ENCODE measurements at regions of chr11 and their contacts with region 1.

Region 1: GRCh38 chr11:47426061-47426956 is at the start of gene PSMC3:
- DNase-seq: peak; percentile 92 to 99 (median 95)
- ATAC-seq: peak; percentile 98
- H3K4me3 ChIP-seq: peak within 1 kb of the TSS; percentile 95
- H3K4me3 Mint-ChIP-seq: peak within 1 kb of the TSS; percentile 91 to 99 (median 98)
- H3K27ac ChIP-seq: peak within 1 kb of the TSS; percentile 96
- H3K27ac Mint-ChIP-seq: peak within 1 kb of the TSS; percentile 93 to 99 (median 97)
- H3K4me1 ChIP-seq: peaks cover 9 to 10% of the 10 kb centered on the region in 2 donors
- H3K4me1 Mint-ChIP-seq: peaks cover 16 to 32% (median 27%) of the 10 kb centered on the region in 7 donors
- H3K27me3 ChIP-seq: no peaks in the 10 kb centered on the region
- H3K27me3 Mint-ChIP-seq: no peaks in the 10 kb centered on the region
- total RNA-seq, gene PSMC3: 42.2 to 149 (median 51.3) TPM

Region 2: DNA sequence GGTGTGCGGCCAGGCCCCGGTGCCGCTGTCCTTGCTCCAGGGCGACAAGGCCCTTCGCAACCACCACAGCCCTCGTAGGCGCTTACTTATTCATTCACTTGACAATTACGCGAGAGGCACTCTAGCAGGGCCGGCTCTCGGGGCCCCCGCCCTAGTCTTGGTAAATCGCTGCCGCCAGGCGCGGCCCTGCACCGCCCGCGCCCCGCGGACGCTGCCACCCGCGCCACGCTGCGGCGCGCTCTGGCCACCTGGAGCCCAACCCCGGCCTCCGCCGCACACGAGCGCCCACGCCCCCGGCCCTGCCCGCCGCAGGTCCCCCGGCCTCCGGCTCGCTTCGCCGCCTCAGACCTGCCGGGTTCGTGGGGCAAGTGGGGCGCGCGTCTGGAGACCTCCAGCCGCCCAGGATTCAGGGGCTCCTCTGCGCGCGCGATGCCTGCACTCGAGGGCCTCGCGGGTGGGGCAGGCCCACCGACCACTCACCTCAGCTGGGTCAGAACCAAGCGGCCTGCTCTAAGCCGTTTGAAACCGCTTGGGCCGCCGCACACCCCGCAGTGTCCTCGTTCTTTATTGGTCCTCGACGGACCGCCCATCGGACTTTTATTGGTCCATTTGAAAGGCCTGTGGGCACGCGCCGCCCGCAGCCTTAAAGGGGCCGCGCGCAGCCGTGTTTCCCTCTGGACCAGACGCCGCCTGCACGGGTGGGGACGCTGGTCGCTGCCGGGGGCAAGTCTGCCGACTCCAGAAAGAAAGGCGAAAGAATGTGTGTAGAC is 580.4 kb before region 1 on chr11 and contains the start of gene CKAP5:
- CTCF ChIA-PET with region 1: no interaction called
- POLR2A ChIA-PET with region 1: no interaction called
- intact Hi-C with region 1: loop called in 1 of 2 experiments (anchors 1 kb)
- DNase-seq: peak; percentile 63 to 89 (median 80)
- ATAC-seq: peak; percentile 96
- H3K4me3 ChIP-seq: peak within 1 kb of the TSS; percentile 71
- H3K4me3 Mint-ChIP-seq: peak within 1 kb of the TSS; percentile 85 to 99 (median 97)
- H3K27ac ChIP-seq: peak within 1 kb of the TSS; percentile 71
- H3K27ac Mint-ChIP-seq: peak within 1 kb of the TSS; percentile 88 to 97 (median 93)
- H3K4me1 ChIP-seq: peaks cover 0 to 14% of the 10 kb centered on the region in 2 donors
- H3K4me1 Mint-ChIP-seq: peaks cover 33 to 50% (median 43%) of the 10 kb centered on the region in 7 donors
- H3K27me3 ChIP-seq: no peaks in the 10 kb centered on the region
- H3K27me3 Mint-ChIP-seq: no peaks in the 10 kb centered on the region
- total RNA-seq, gene CKAP5: 28.3 to 126 (median 46.0) TPM

Region 3: GRCh38 chr11:47241841-47242301 is 184.4 kb before region 1 on chr11:
- CTCF ChIA-PET with region 1: no interaction called
- POLR2A ChIA-PET with region 1: no interaction called
- intact Hi-C with region 1: no loop called
- DNase-seq: no peak
- ATAC-seq: no peak
- H3K4me3 ChIP-seq: no peak overlapping the region
- H3K4me3 Mint-ChIP-seq: no peak overlapping the region
- H3K27ac ChIP-seq: no peak overlapping the region
- H3K27ac Mint-ChIP-seq: peak overlapping the region in 8 of 9 donors; percentile 2 to 84 (median 58)
- H3K4me1 ChIP-seq: no peaks in the 10 kb centered on the region
- H3K4me1 Mint-ChIP-seq: peaks cover 0 to 12% (median 9%) of the 10 kb centered on the region in 7 donors
- H3K27me3 ChIP-seq: no peaks in the 10 kb centered on the region
- H3K27me3 Mint-ChIP-seq: no peaks in the 10 kb centered on the region

Region 4: GRCh38 chr11:47373876-47374720 is 52.2 kb before region 1 on chr11:
- CTCF ChIA-PET with region 1: interaction called, 5 read pairs
- POLR2A ChIA-PET with region 1: interaction called, 6 read pairs
- intact Hi-C with region 1: loop called in 1 of 2 experiments (anchors 1 kb)
- DNase-seq: peak; percentile 69 to 91 (median 82)
- ATAC-seq: peak; percentile 84
- H3K4me3 ChIP-seq: no peak overlapping the region
- H3K4me3 Mint-ChIP-seq: peak overlapping the region in 1 of 10 donors; percentile 51
- H3K27ac ChIP-seq: no peak overlapping the region
- H3K27ac Mint-ChIP-seq: peak overlapping the region in 3 of 9 donors; percentile 48 to 72 (median 65)
- H3K4me1 ChIP-seq: peaks cover 0 to 3% of the 10 kb centered on the region in 2 donors
- H3K4me1 Mint-ChIP-seq: peaks cover 5 to 18% (median 9%) of the 10 kb centered on the region in 7 donors
- H3K27me3 ChIP-seq: no peaks in the 10 kb centered on the region
- H3K27me3 Mint-ChIP-seq: no peaks in the 10 kb centered on the region

Region 5: GRCh38 chr11:47407746-47408590 is 18.3 kb before region 1 on chr11 and contains the start of gene SLC39A13:
- CTCF ChIA-PET with region 1: interaction called, 7 read pairs
- POLR2A ChIA-PET with region 1: interaction called, 6 read pairs
- intact Hi-C with region 1: loop called (anchors 1 kb)
- DNase-seq: peak; percentile 80 to 99 (median 88)
- ATAC-seq: peak; percentile 91
- H3K4me3 ChIP-seq: peak within 1 kb of the TSS; percentile 71
- H3K4me3 Mint-ChIP-seq: peak within 1 kb of the TSS; percentile 87 to 99 (median 91)
- H3K27ac ChIP-seq: peak within 1 kb of the TSS; percentile 83
- H3K27ac Mint-ChIP-seq: peak within 1 kb of the TSS; percentile 90 to 98 (median 94)
- H3K4me1 ChIP-seq: peaks cover 8 to 13% of the 10 kb centered on the region in 2 donors
- H3K4me1 Mint-ChIP-seq: peaks cover 4 to 23% (median 21%) of the 10 kb centered on the region in 7 donors
- H3K27me3 ChIP-seq: no peaks in the 10 kb centered on the region
- H3K27me3 Mint-ChIP-seq: no peaks in the 10 kb centered on the region
- total RNA-seq, gene SLC39A13: 29.9 to 60.4 (median 45.1) TPM

Region 6: GRCh38 chr11:47578524-47579460 is 152.5 kb after region 1 on chr11 and contains the starts of genes KBTBD4 and NDUFS3:
- CTCF ChIA-PET with region 1: no interaction called
- POLR2A ChIA-PET with region 1: no interaction called
- intact Hi-C with region 1: loop called (anchors 1 kb)
- DNase-seq: peak; percentile 85 to 95 (median 88)
- ATAC-seq: peak; percentile 97
- H3K4me3 ChIP-seq: peak within 1 kb of the TSS; percentile 95
- H3K4me3 Mint-ChIP-seq: peak within 1 kb of the TSS; percentile 95 to 100 (median 99)
- H3K27ac ChIP-seq: peak within 1 kb of the TSS; percentile 80
- H3K27ac Mint-ChIP-seq: peak within 1 kb of the TSS; percentile 97 to 100 (median 99)
- H3K4me1 ChIP-seq: peaks cover 26 to 28% of the 10 kb centered on the region in 2 donors
- H3K4me1 Mint-ChIP-seq: peaks cover 17 to 51% (median 41%) of the 10 kb centered on the region in 7 donors
- H3K27me3 ChIP-seq: no peaks in the 10 kb centered on the region
- H3K27me3 Mint-ChIP-seq: no peaks in the 10 kb centered on the region
- total RNA-seq, gene KBTBD4: 15.0 to 26.5 (median 20.9) TPM
- total RNA-seq, gene NDUFS3: 68.6 to 116 (median 85.2) TPM

Region 7: DNA sequence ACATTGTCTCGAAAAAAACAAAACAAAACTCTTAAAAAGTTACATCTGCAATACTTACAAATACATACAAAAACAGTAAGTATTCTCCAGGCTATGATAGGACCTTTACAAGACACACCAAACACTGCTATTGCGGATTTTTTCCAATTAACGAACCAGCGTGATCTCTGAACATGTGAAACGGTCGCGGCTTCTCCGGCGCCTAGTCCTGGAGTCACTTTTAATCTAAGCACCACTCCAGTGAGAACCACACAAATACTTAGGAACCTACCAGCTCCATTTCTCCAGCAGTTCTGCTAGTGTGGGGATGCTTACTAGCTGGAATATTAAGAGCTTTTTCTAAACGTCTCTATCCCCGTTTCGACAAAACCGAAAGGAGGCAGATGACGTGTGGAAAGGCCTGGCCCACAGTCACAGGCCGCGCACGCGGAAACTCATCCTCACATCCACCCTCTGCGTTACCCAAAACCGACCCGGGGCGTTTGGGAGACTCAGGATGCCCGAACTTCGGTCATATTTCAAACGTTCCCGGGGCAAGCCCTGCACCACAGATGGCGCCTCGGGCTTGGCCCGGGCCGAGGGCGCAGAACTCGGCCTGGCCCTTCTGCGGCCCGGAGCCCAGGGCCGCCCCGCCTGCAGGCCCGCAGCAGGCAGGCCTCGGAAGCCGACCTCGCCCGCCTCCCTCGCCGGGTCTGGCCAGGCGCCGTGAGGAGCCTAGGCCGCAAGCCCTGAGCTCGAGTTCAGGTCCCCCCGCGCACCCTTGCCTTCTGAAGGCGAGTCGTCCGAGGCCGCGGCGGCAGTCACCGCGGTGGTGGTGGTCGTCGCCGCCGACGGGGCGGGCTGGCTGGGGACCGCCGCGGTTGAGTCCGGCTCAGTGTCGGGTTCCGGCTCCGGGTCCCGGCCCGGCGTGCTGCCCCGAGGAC is 340.3 kb after region 1 on chr11:
- CTCF ChIA-PET with region 1: no interaction called
- POLR2A ChIA-PET with region 1: no interaction called
- intact Hi-C with region 1: loop called (anchors 1 kb)
- DNase-seq: peak; percentile 60 to 84 (median 79)
- ATAC-seq: peak; percentile 52
- H3K4me3 ChIP-seq: peak overlapping the region; percentile 94
- H3K4me3 Mint-ChIP-seq: peak overlapping the region; percentile 88 to 100 (median 96)
- H3K27ac ChIP-seq: peak overlapping the region; percentile 97
- H3K27ac Mint-ChIP-seq: peak overlapping the region; percentile 96 to 100 (median 99)
- H3K4me1 ChIP-seq: peaks cover 20 to 22% of the 10 kb centered on the region in 2 donors
- H3K4me1 Mint-ChIP-seq: peaks cover 16 to 39% (median 23%) of the 10 kb centered on the region in 7 donors
- H3K27me3 ChIP-seq: no peaks in the 10 kb centered on the region
- H3K27me3 Mint-ChIP-seq: no peaks in the 10 kb centered on the region